A549 (cell line): ENCODE measurements at regions of chr12 and their contacts with region 1.

Region 1: DNA sequence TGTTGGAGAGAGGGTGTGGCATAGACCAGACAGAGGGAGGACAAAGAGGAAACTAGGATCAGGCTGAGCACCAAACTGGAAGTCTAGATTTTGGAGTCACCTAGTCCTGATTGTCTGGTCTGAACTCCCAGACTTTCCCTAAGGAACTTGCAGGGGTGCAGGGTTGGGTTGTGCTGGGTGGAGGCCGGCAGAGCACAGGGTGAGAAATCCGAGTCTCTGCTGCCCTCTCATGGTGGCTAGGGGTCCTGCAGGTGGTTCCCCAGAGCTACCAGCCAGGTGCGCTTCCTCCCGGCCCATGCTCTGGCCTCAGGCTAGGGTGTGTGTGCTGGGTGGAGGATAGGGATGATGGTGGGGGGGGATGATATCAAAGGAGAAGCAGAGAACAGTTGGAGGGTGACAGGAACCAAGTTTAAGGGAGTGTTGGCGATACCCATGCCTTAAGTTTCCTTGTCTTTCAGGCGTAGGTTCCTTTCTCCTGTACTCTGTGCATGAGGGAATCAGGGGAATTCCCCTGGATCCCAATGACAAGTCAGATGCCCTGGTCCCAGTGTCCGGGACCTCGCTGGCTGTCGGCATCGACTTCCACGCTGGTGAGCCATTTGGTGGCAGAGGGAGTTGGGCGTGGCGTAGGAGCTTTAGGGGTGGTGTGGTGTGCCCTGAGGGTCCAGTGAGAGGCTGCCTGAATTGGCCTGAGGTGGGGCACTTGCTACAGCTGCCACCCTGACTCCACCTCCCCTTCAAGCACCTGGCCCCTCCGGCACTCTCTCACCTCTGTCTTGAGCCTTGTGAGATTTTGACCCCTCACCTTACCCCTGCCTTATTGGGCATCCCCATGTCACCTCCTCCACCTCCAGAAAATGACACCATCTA is 33.4 kb upstream of the NXPH4 start:
- DNase-seq: peak; percentile 73 to 94
- ATAC-seq: peak; percentile 79 to 95
- H3K4me3 ChIP-seq: no peak overlapping the region
- H3K27ac ChIP-seq: no peak overlapping the region
- H3K4me1 ChIP-seq: no peaks in the 10 kb centered on the region
- CTCF ChIP-seq: peak; percentile 85
- EP300 ChIP-seq: no peak
- POLR2A ChIP-seq: no peak
- RAD21 ChIP-seq: peak; percentile 91

Region 2: GRCh38 chr12:57088459-57089248 is 94.5 kb before region 1 on chr12 and contains the start of gene NAB2:
- CTCF ChIA-PET with region 1: interaction called, 36 read pairs
- POLR2A ChIA-PET with region 1: no interaction called
- DNase-seq: peak; percentile 89 to 97
- ATAC-seq: peak; percentile 48 to 71
- H3K4me3 ChIP-seq: peak within 1 kb of the TSS; percentile 89
- H3K27ac ChIP-seq: peak within 1 kb of the TSS; percentile 96 to 100
- H3K4me1 ChIP-seq: peaks cover 19% of the 10 kb centered on the region
- CTCF ChIP-seq: no peak
- EP300 ChIP-seq: no peak
- POLR2A ChIP-seq: peak; percentile 67
- RAD21 ChIP-seq: no peak
- polyA plus RNA-seq, gene NAB2: 8.6 and 10.1 TPM in 2 replicates

Region 3: GRCh38 chr12:57135527-57136326 is 47.4 kb before region 1 on chr12:
- CTCF ChIA-PET with region 1: interaction called, 1,152 read pairs
- POLR2A ChIA-PET with region 1: no interaction called
- DNase-seq: no peak
- ATAC-seq: no peak
- H3K4me3 ChIP-seq: no peak overlapping the region
- H3K27ac ChIP-seq: peak overlapping the region in 1 of 2 experiments; percentile 45; a peak in 3 of 6 replicates
- H3K4me1 ChIP-seq: peaks cover 34% of the 10 kb centered on the region
- CTCF ChIP-seq: no peak
- EP300 ChIP-seq: no peak
- POLR2A ChIP-seq: no peak
- RAD21 ChIP-seq: no peak

Region 4: DNA sequence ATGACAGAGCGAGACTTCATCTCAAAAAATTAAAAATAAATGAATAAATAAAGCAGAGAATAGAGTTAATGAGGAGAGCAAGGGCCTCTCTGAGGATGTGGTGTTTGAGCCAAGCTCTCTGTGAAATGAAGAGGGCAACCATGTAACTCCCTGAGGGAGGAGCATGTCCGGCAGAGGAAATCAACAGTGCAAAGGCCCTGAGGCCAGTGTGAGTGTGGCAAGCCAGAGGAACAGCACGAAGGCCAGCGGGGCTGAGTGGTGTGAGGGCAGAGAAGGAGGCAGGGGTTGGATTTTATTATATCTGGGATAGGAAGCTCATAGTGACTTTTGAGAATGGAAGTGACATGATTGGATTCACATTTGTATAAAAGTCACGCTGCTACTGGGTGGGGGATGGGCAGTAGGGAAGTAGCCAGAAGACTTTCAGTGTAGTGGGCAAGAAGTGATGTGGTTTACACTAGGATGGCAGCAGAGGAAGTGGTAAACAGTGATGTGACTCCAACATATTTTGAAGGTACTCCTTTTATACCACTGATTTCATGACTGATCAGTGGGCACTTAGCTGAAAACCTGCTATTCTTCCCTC is 25.5 kb before region 1 on chr12:
- CTCF ChIA-PET with region 1: interaction called, 27 read pairs
- POLR2A ChIA-PET with region 1: no interaction called
- DNase-seq: no peak
- ATAC-seq: no peak
- H3K4me3 ChIP-seq: no peak overlapping the region
- H3K27ac ChIP-seq: no peak overlapping the region
- H3K4me1 ChIP-seq: no peaks in the 10 kb centered on the region
- CTCF ChIP-seq: no peak
- EP300 ChIP-seq: no peak
- POLR2A ChIP-seq: no peak
- RAD21 ChIP-seq: no peak

Region 5: GRCh38 chr12:57238854-57239554 is 55.8 kb after region 1 on chr12:
- CTCF ChIA-PET with region 1: interaction called, 11 read pairs
- POLR2A ChIA-PET with region 1: no interaction called
- DNase-seq: peak; percentile 88 to 92
- ATAC-seq: peak; percentile 49 to 73
- H3K4me3 ChIP-seq: peak overlapping the region; percentile 55
- H3K27ac ChIP-seq: peak overlapping the region; percentile 75 to 93
- H3K4me1 ChIP-seq: peaks cover 26% of the 10 kb centered on the region; the same call in 2 of the 3 replicates
- CTCF ChIP-seq: peak; percentile 100
- EP300 ChIP-seq: no peak
- POLR2A ChIP-seq: no peak
- RAD21 ChIP-seq: peak; percentile 79 to 88